ENCODE measurements at regions of chr2 and their contacts with region 1.

Region 1: DNA sequence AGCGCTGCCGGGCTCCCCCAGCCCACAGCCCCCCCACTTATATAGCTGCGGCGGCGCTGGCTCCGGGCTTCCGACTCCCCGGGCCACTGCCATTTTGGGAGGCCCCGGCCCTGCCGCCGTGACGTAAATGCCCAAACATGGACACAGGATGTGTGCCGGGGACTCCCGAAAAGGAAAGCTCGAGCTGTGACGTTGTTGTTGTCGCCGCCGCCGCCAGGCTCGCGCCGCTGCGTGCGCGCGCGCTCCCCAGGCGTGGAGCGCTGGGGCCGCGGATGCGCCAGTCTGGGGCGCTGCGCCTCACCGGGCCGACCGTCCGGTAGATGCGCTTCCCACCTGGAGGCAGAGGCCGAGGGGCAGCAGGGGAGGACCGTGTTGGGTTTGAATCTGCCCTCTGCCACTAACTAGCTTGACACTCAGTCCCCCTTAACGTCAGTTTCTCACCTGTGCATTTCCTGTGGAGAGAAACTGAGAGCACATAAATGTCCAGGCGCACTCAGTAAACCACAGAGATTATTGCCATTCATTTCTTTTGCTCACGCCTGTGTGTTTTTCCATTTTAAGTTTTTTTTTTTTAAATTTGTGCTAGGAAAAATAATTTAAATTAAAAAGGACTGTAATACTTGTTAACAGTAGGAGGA is at the start of gene EGR4:
- DNase-seq: peak; percentile 93
- H3K4me3 ChIP-seq: peak within 1 kb of the TSS; percentile 51 to 62
- H3K27ac ChIP-seq: no peak within 1 kb of the TSS
- H3K4me1 ChIP-seq: peaks cover 0 to 15% of the 10 kb centered on the region in 2 experiments; a peak in 1 of 4 replicates
- H3K27me3 ChIP-seq: peaks cover 54% of the 10 kb centered on the region
- CTCF ChIP-seq: no peak
- EP300 ChIP-seq: no peak
- RAD21 ChIP-seq: no peak
- polyA plus RNA-seq, gene EGR4: 0.02 TPM in 1 of 2 replicates, not detected in the other

Region 2: GRCh38 chr2:73233154-73233931 is 60.3 kb before region 1 on chr2 and contains the start of gene PRADC1:
- CTCF ChIA-PET with region 1: interaction called, 27 read pairs
- POLR2A ChIA-PET with region 1: interaction called, 5 read pairs
- DNase-seq: peak; percentile 97
- H3K4me3 ChIP-seq: peak within 1 kb of the TSS; percentile 96 to 99
- H3K27ac ChIP-seq: peak within 1 kb of the TSS; percentile 91 to 95
- H3K4me1 ChIP-seq: peaks cover 0 to 20% of the 10 kb centered on the region in 2 experiments; a peak in 3 of 4 replicates
- H3K27me3 ChIP-seq: no peaks in the 10 kb centered on the region
- CTCF ChIP-seq: no peak
- EP300 ChIP-seq: no peak
- RAD21 ChIP-seq: no peak
- polyA plus RNA-seq, gene PRADC1: 8.5 and 9.6 TPM in 2 replicates

Region 3: DNA sequence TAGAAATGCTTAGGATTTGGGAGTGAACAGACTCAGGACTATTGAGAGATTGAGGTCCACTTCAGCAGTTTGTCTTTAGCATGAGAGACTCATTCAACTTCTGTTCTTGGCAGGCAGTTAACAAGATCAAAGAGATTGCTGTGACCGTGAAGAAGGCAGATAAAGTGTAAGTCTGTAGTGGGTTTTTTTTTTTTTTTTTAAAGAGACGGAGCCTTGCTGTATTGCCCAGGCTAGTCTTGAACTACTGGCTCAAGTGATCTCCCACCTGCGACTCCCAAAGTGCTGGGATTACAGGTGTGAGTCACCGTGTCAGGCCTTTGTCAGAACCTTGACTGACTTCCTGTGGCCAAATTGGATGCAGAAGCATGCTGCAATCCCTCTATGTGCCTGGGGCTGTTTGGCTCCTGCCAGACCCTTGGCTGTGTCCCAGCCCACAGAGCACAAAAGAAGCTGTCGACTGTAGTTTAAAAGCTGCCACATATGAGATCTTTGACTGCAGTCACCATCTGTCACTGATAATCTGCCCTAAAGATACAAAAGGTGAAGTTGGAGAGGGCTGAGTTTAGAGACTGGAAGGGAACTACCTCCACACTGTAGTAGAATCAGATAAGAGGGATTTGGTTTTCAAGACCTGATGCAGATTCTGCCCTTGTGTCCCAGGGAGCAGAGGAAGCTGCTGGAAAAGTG is 49.6 kb before region 1 on chr2:
- CTCF ChIA-PET with region 1: interaction called, 19 read pairs
- POLR2A ChIA-PET with region 1: no interaction called
- DNase-seq: peak; percentile 74
- H3K4me3 ChIP-seq: no peak overlapping the region
- H3K27ac ChIP-seq: peak overlapping the region in 1 of 2 experiments; percentile 81; a peak in 2 of 4 replicates
- H3K4me1 ChIP-seq: peaks cover 0 to 22% of the 10 kb centered on the region in 2 experiments; a peak in 2 of 4 replicates
- H3K27me3 ChIP-seq: no peaks in the 10 kb centered on the region
- CTCF ChIP-seq: no peak
- EP300 ChIP-seq: peak in 1 of 2 experiments; percentile 77; a peak in 2 of 4 replicates
- RAD21 ChIP-seq: no peak

Region 4: DNA sequence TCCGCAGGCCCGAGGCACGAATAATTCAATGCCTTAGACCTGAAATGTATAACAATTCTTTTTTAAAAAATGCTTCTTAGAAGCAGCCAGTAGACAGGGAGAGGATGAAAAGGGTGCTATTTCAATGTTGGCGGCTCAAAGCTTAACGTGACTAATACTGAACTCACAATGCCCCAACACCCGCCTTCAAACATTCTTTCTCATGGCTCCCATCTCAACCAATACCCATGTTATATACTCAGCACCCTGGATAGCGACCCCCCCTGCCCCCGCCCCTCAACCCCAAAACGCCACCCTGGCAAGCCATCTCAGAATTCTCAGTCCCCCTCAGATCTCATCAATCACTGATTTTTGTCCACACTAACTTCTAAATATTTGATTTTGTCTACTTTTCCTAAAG is 13.8 kb before region 1 on chr2:
- CTCF ChIA-PET with region 1: interaction called, 25 read pairs
- POLR2A ChIA-PET with region 1: no interaction called
- DNase-seq: no peak
- H3K4me3 ChIP-seq: no peak overlapping the region
- H3K27ac ChIP-seq: no peak overlapping the region
- H3K4me1 ChIP-seq: peaks cover 6 to 11% of the 10 kb centered on the region in 2 experiments; a peak in 1 of 4 replicates
- H3K27me3 ChIP-seq: no peaks in the 10 kb centered on the region
- CTCF ChIP-seq: no peak
- EP300 ChIP-seq: no peak
- RAD21 ChIP-seq: no peak

Region 5: DNA sequence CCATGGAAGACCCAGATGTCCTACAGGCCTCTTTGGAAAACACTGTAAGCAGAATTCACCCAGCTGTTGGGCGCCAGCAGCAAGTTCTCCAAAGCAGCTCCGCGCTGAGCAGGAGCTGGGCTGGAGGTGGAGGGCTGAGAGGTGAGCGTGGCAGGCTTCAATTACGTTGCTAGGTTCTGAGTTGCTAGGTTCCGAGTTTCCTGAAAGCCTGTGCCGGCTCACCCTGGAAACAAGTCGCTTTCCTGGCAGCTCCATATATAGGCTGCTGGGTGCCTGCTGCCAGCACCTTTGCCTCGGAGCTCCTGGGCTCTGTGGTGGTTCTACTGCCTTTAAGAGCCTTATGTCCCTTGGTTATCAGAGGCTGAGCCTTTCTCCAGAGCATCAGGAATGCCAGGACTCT is 14.1 kb after region 1 on chr2:
- CTCF ChIA-PET with region 1: interaction called, 16 read pairs
- POLR2A ChIA-PET with region 1: no interaction called
- DNase-seq: no peak
- H3K4me3 ChIP-seq: no peak overlapping the region
- H3K27ac ChIP-seq: no peak overlapping the region
- H3K4me1 ChIP-seq: no peaks in the 10 kb centered on the region
- H3K27me3 ChIP-seq: peaks cover 6% of the 10 kb centered on the region; the same call in 1 of the 2 replicates
- CTCF ChIP-seq: no peak
- EP300 ChIP-seq: no peak
- RAD21 ChIP-seq: no peak